Thyroid gland (tissue), 4 donors: ENCODE measurements at regions of chr10 and their contacts with region 1.

Region 1: GRCh38 chr10:30591249-30591670 is 38.3 kb downstream of the LYZL2 start:
- DNase-seq: peak; percentile 25 to 34
- H3K4me3 ChIP-seq: no peak overlapping the region
- H3K27ac ChIP-seq: no peak overlapping the region
- H3K4me1 ChIP-seq: no peaks in the 10 kb centered on the region
- H3K27me3 ChIP-seq: no peaks in the 10 kb centered on the region
- CTCF ChIP-seq: peak; percentile 63 to 85 (median 71)
- POLR2A ChIP-seq: no peak

Region 2: GRCh38 chr10:30391266-30391665 is 200.0 kb before region 1 on chr10:
- intact Hi-C with region 1: loop called (anchors 2 kb)
- DNase-seq: no peak
- H3K4me3 ChIP-seq: no peak overlapping the region
- H3K27ac ChIP-seq: no peak overlapping the region
- H3K4me1 ChIP-seq: peaks cover 0 to 6% of the 10 kb centered on the region in 2 donors
- H3K27me3 ChIP-seq: no peaks in the 10 kb centered on the region
- CTCF ChIP-seq: no peak
- POLR2A ChIP-seq: no peak

Region 3: GRCh38 chr10:30413996-30414576 is 177.2 kb before region 1 on chr10:
- intact Hi-C with region 1: loop called (anchors 5 kb)
- DNase-seq: peak in 1 of 2 donors; percentile 8
- H3K4me3 ChIP-seq: no peak overlapping the region
- H3K27ac ChIP-seq: no peak overlapping the region
- H3K4me1 ChIP-seq: peaks cover 0 to 8% of the 10 kb centered on the region in 2 donors
- H3K27me3 ChIP-seq: no peaks in the 10 kb centered on the region
- CTCF ChIP-seq: peak; percentile 56 to 95 (median 80)
- POLR2A ChIP-seq: no peak

Region 4: DNA sequence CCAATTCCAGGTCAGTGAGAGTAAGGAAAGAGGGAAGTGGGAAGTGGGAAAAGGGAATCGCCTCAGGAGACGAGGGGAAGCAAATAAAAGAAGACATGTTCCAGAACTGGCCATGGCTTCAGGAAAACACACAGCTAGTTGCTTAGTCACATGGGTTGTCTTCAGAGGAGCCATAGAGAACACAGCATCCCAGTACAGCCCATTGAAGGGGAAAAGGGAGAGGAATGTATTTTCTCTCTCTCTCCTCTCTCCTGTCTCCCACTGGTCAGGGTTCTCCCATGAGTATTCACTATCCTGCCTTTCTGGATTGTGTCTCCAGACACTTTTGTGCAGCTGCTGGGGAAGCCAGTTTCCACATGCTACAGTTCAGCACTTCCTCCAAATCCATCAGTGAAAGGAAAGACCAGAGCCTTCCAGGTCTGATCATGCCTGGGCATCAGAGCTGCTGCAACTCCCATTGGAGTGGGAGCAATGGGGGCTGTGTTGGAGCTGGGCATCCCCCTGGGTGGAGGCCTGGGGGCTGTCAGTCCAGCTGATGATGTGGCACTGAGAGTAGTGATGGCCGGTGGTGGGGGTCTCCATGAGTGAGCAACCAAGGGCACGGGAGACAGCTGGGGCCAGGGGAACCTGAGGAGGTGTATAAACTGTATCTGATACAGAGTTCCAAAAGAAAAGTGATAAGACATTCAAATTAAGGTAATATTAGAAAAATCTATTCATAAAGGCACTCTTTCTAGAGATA is 118.7 kb before region 1 on chr10:
- intact Hi-C with region 1: no loop called
- DNase-seq: no peak
- H3K4me3 ChIP-seq: no peak overlapping the region
- H3K27ac ChIP-seq: no peak overlapping the region
- H3K4me1 ChIP-seq: no peaks in the 10 kb centered on the region
- H3K27me3 ChIP-seq: no peaks in the 10 kb centered on the region
- CTCF ChIP-seq: no peak
- POLR2A ChIP-seq: no peak

Region 5: DNA sequence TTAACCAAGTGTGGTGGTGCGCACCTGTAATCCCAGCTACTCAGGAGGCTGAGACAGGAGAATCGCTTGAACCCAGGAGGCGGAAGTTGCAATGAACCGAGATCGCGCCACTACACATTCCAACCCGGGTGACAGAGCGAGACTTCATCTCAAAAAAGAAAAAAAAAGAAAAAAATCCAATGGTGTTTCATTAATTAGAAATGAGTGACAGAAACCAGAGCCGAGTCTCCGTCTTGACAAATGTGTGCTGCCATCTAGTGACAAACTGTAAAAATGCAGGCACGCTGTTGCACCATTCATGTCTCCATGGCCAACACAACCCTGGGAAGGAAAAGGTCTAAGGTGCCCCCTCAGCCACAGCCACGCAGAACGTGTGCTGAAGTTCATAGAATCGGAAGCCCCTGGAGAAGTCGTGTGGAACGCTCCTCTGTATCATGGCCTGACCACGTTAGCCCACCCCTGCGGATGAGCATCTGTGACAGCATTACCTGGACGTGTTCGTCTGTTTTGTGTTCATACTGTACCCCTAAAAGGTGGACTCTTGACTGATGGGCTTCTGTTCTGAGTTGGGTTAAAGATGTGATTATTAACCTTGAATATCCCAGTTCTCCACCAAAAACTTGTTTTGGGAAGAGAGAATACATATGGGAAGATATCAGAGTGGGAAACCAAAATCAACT is 56.7 kb before region 1 on chr10:
- intact Hi-C with region 1: loop called (anchors 5 kb)
- DNase-seq: peak; percentile 74 to 76
- H3K4me3 ChIP-seq: no peak overlapping the region
- H3K27ac ChIP-seq: no peak overlapping the region
- H3K4me1 ChIP-seq: peaks cover 9 to 23% of the 10 kb centered on the region in 2 donors
- H3K27me3 ChIP-seq: no peaks in the 10 kb centered on the region
- CTCF ChIP-seq: peak; percentile 77 to 91 (median 84)
- POLR2A ChIP-seq: no peak

Region 6: GRCh38 chr10:30827531-30828120 is 236.4 kb after region 1 on chr10:
- intact Hi-C with region 1: no loop called
- DNase-seq: peak in 1 of 2 donors; percentile 57
- H3K4me3 ChIP-seq: no peak overlapping the region
- H3K27ac ChIP-seq: no peak overlapping the region
- H3K4me1 ChIP-seq: peaks cover 15 to 31% of the 10 kb centered on the region in 2 donors
- H3K27me3 ChIP-seq: no peaks in the 10 kb centered on the region
- CTCF ChIP-seq: no peak
- POLR2A ChIP-seq: no peak

Region 7: GRCh38 chr10:31062856-31063255 is 471.6 kb after region 1 on chr10:
- intact Hi-C with region 1: no loop called
- DNase-seq: no peak
- H3K4me3 ChIP-seq: no peak overlapping the region
- H3K27ac ChIP-seq: peak overlapping the region in 2 of 3 donors; percentile 5 to 29
- H3K4me1 ChIP-seq: peaks cover 0 to 16% of the 10 kb centered on the region in 2 donors
- H3K27me3 ChIP-seq: no peaks in the 10 kb centered on the region
- CTCF ChIP-seq: no peak
- POLR2A ChIP-seq: no peak